Activated B cell treated with CpG ODN at 0.5 μM for 24 hours (primary cell): ENCODE measurements at regions of chr21 and their contacts with region 1.

Region 1: DNA sequence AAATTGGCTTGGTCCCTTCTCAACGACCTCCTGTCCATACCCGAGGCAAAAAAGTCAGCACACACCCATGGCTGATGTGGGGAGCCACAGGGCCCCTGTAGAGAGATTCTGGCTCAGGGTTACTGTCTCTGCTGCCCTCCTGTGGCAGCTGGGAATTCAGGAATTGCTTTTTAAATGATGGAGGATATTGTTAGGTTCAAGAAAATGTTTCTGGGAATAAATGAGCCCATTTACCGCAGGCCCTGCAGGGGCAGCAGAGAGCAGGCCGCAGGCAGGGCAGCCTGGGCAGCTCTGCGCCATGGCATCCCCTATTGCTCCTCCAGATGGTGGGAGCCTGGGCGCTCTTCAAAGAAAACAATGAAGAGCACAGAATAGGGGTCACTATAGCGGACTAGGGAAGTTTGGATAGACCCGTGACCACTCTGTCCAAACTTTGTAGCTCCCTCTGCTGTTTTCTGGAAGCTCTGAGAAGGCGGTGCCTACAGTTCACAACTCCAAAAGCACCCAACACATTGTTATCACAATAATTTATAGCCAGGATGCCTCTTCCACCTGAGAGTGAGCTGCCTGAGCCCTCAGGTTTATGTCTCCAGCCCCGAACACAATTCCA is 201.1 kb downstream of the BACH1 start:
- DNase-seq: no peak
- ATAC-seq: no peak
- H3K4me3 Mint-ChIP-seq: no peak overlapping the region
- H3K27ac Mint-ChIP-seq: no peak overlapping the region
- H3K4me1 Mint-ChIP-seq: no peaks in the 10 kb centered on the region
- H3K27me3 Mint-ChIP-seq: no peaks in the 10 kb centered on the region
- CTCF ChIP-seq: no peak

Region 2: GRCh38 chr21:29487154-29487553 is 12.7 kb before region 1 on chr21:
- CTCF ChIA-PET with region 1: no interaction called
- POLR2A ChIA-PET with region 1: no interaction called
- intact Hi-C with region 1: no loop called
- DNase-seq: no peak
- ATAC-seq: no peak
- H3K4me3 Mint-ChIP-seq: no peak overlapping the region
- H3K27ac Mint-ChIP-seq: no peak overlapping the region
- H3K4me1 Mint-ChIP-seq: no peaks in the 10 kb centered on the region
- H3K27me3 Mint-ChIP-seq: no peaks in the 10 kb centered on the region
- CTCF ChIP-seq: no peak

Region 3: DNA sequence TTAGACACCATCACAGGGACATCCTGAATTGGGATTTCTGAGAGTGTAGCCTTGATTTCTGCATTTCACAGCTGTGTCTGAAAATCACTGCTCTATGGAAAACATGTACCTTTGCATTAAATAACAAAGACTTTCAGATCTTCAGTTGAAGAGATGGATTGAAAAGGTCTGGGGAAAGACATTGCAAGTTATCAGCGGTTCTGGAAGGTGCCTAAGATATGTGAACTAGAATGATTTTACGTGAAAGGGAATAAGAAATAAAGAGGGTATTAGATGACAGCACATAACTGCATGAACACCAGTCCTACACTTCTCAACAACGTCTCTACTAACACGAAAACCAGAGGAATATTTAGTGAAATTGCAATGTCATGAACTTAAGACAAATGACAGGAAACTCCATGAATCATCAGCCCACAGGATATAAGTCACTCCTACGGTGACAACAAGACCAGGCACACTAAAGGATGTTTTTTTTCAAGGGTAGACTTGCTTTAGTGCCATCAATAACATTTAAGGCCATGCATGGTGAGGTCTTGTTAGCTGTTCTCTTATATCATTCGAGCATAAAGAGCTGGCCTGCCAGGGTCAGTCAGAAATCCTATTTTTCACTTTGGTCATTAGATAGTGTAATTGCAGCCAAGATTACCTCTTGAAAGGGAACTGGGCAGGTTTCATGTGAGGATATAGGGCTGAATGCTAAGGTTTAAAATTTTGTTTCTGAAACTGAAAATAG is 156.8 kb after region 1 on chr21:
- CTCF ChIA-PET with region 1: no interaction called
- POLR2A ChIA-PET with region 1: interaction called, 12 read pairs
- intact Hi-C with region 1: no loop called
- DNase-seq: no peak
- ATAC-seq: no peak
- H3K4me3 Mint-ChIP-seq: no peak overlapping the region
- H3K27ac Mint-ChIP-seq: no peak overlapping the region
- H3K4me1 Mint-ChIP-seq: peaks cover 6% of the 10 kb centered on the region
- H3K27me3 Mint-ChIP-seq: no peaks in the 10 kb centered on the region
- CTCF ChIP-seq: no peak

Region 4: DNA sequence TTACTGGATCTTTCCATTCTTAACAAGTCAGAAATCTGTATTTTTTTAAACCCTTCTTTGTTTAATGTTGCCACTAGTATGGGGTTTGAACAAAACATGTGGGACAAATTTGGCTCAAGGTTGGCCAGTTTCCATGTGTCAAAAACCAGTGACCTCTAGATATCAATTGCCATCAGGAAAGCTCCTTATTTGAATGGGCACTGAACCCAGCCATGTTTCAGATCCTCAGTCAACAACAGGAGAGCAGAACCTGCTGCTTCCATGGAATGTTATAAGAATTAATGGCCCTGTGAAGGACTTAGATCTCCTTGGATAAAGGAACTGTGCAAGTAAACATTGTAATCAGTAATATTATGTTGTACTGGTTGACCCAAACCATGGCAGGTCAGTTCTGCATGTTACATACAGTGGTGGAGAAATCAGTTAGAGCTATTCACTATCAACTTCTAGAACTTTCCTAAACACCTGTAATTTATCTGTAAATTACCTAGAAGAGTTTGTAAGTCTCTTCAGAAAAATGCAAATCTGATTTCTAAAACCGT is 727.2 kb after region 1 on chr21:
- CTCF ChIA-PET with region 1: no interaction called
- POLR2A ChIA-PET with region 1: no interaction called
- intact Hi-C with region 1: no loop called
- DNase-seq: no peak
- ATAC-seq: no peak
- H3K4me3 Mint-ChIP-seq: no peak overlapping the region
- H3K27ac Mint-ChIP-seq: no peak overlapping the region
- H3K4me1 Mint-ChIP-seq: no peaks in the 10 kb centered on the region
- H3K27me3 Mint-ChIP-seq: no peaks in the 10 kb centered on the region
- CTCF ChIP-seq: no peak